ENCODE measurements at regions of chr3 and their contacts with region 1.

Region 1: DNA sequence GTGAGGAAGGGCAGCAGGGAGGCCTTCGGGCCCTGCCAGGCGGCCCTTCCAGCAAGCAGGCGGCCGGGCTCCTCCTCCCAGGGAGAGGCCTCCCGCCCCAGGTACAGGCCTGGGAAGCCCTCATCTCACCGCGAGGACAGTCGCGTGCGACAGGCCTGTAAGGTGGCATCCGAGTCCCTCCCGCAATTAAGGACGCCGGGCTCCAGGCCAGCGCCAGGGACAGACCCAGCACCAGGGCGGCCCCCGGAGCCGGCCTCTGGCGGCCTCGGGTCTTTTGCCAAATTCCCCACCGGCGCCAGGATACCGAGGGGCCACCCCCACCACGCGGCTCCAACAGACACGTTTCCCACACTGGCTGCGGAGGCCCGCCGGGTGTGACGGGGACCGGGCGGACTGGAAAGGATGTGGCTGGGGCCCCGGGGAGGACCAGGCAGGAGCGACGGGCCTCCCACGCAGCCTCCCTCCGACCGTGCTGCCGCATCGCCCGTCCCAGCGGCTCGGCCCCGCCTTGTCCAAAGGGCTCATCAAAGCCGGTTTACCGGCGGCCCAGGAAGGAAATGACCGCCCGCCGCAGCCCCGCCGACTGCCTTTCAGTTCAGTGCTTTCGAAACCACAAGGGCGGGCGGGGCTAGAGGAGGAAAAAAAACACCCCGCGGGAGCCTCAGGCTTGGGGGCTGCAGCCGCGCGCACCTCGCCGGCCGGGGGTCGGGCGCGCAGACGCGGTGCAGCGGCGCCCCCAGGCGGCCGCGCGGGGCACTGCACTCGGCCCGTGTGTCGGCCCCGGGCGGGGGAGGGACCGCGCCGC is 11.3 kb downstream of the XXYLT1 start:
- DNase-seq: peak; percentile 93
- ATAC-seq: peak; percentile 88

Region 2: DNA sequence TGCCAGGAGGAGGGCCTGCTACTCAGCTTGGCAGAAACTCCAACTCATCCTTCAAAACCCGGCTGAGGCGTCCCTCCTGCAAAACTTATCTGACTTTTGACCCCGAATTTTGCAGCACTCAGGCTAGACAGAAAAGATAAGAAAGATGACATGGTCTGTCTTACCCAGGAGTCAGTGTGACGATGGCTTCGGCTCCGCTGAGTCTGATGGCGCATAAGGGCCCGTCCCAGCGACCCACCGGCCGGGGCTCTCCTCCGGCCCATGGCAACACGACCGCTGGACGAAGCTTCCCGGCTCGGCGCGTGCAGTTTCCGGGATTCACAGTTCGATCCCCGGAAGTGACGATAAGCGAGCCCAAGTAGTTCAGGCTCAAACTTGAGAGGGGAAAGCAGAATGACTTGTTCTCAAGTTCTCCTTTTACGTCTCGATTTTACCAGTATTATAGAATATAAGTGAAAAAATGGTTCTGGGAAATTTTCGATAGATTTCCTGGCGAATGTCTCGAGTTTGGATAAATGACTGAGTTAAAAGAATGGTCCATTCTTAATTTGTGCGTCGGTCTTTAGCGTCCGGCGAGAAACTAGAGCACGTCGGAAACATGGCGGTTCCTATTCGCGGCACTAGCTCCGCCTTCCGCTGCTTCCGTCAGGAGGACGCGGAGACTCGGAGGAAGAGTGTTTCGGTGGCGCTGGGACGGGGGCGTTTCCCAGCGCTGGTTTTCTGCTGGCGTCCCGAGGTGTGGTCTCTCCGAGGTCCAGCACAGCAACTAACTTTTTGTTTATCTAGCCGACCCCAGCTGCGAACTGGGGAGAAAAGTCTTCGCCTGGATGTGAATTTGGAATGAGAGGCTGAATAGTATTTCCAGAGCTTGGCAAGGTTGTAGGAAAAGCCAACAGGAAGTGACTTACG is 587.5 kb before region 1 on chr3 and contains the start of gene LSG1:
- intact Hi-C with region 1: loop called (anchors 5 kb)
- DNase-seq: peak; percentile 92
- ATAC-seq: peak; percentile 97
- total RNA-seq, gene LSG1: 33.8 TPM

Region 3: GRCh38 chr3:194685718-194686555 is 573.7 kb before region 1 on chr3 and contains the start of gene FAM43A:
- intact Hi-C with region 1: loop called (anchors 5 kb)
- DNase-seq: peak; percentile 95
- ATAC-seq: peak; percentile 89
- total RNA-seq, gene FAM43A: 39.9 TPM

Region 4: GRCh38 chr3:195117978-195118581 is 141.6 kb before region 1 on chr3:
- intact Hi-C with region 1: loop called (anchors 10 kb)
- DNase-seq: no peak
- ATAC-seq: no peak

Measured in sciatic nerve (tissue), 2 donors.